ENCODE measurements at regions of chr19 and their contacts with region 1.

Region 1: DNA sequence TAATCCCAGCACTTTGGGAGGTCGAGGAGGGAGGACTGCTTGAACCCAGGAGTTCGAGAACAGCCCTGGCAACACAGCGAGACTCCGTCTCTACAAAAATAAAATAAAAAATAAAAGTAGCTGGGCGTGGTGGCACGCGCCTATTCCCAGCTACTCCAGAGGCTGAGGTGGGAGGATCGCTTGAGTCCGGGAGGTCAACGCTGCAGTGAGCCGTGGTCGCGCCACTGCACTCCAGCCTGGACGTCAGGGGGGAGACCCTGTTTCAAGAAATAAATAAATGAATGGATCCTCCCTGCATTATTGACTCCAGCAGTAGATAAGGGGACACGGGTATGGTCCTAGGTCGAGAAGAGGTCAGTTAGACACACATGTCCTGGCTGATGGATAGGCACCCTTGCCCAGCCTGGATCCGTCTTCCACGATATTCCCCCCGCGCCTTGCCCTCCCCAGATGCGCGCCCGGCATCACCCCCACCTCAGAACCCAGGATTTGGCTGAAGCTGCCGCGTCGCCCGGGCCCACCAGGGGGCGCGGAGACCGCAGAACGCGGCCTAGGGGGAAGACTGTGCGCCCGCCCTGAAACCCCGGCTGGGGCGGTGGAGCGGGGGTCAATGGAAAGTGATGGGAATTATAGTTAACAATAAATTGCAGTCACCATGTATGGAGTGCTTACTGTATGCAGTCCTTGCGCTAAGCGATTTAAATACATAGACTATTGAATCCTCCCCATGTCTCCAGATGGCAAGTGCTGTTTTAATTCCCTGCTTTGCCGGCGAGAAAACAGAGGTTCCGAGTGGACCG is 2.1 kb upstream of the HOOK2 start:
- DNase-seq: no peak
- H3K4me3 ChIP-seq: peak overlapping the region; percentile 56 to 85
- H3K27ac ChIP-seq: peak overlapping the region; percentile 94
- H3K4me1 ChIP-seq: peaks cover 45% of the 10 kb centered on the region
- H3K27me3 ChIP-seq: no peaks in the 10 kb centered on the region
- CTCF ChIP-seq: peak; percentile 81 to 98 (median 96)
- POLR2A ChIP-seq: no peak

Region 2: GRCh38 chr19:12796146-12797071 is 19.0 kb after region 1 on chr19:
- intact Hi-C with region 1: loop called (anchors 1 kb)
- DNase-seq: peak in 1 of 2 donors; percentile 90
- H3K4me3 ChIP-seq: no peak overlapping the region
- H3K27ac ChIP-seq: peak overlapping the region; percentile 65
- H3K4me1 ChIP-seq: peaks cover 38% of the 10 kb centered on the region
- H3K27me3 ChIP-seq: no peaks in the 10 kb centered on the region
- CTCF ChIP-seq: peak; percentile 95 to 98 (median 96)
- POLR2A ChIP-seq: no peak